CD8-positive, alpha-beta T cell (primary cell): ENCODE measurements at regions of chr7 and their contacts with region 1.

Region 1: GRCh38 chr7:133434055-133434865 is 181.4 kb downstream of the EXOC4 start:
- DNase-seq: peak in 2 of 9 experiments; percentile 38 to 50
- ATAC-seq: no peak
- H3K4me3 ChIP-seq: no peak overlapping the region
- H3K4me3 Mint-ChIP-seq: no peak overlapping the region
- H3K27ac ChIP-seq: no peak overlapping the region
- H3K27ac Mint-ChIP-seq: no peak overlapping the region
- H3K4me1 ChIP-seq: no peaks in the 10 kb centered on the region
- H3K4me1 Mint-ChIP-seq: peaks cover 5% of the 10 kb centered on the region
- H3K27me3 ChIP-seq: no peaks in the 10 kb centered on the region
- H3K27me3 Mint-ChIP-seq: no peaks in the 10 kb centered on the region
- CTCF ChIP-seq: peak; percentile 32

Region 2: GRCh38 chr7:131688738-131689661 is 1745.3 kb before region 1 on chr7:
- CTCF ChIA-PET with region 1: no interaction called
- POLR2A ChIA-PET with region 1: no interaction called
- intact Hi-C with region 1: loop called in 1 of 2 experiments (anchors 2 kb)
- DNase-seq: peak; percentile 14 to 74 (median 53)
- ATAC-seq: peak; percentile 65
- H3K4me3 ChIP-seq: no peak overlapping the region
- H3K4me3 Mint-ChIP-seq: no peak overlapping the region
- H3K27ac ChIP-seq: no peak overlapping the region
- H3K27ac Mint-ChIP-seq: no peak overlapping the region
- H3K4me1 ChIP-seq: no peaks in the 10 kb centered on the region
- H3K4me1 Mint-ChIP-seq: peaks cover 3% of the 10 kb centered on the region
- H3K27me3 ChIP-seq: peaks cover 0 to 5% of the 10 kb centered on the region in 2 experiments
- H3K27me3 Mint-ChIP-seq: peaks cover 38% of the 10 kb centered on the region
- CTCF ChIP-seq: peak; percentile 85

Region 3: DNA sequence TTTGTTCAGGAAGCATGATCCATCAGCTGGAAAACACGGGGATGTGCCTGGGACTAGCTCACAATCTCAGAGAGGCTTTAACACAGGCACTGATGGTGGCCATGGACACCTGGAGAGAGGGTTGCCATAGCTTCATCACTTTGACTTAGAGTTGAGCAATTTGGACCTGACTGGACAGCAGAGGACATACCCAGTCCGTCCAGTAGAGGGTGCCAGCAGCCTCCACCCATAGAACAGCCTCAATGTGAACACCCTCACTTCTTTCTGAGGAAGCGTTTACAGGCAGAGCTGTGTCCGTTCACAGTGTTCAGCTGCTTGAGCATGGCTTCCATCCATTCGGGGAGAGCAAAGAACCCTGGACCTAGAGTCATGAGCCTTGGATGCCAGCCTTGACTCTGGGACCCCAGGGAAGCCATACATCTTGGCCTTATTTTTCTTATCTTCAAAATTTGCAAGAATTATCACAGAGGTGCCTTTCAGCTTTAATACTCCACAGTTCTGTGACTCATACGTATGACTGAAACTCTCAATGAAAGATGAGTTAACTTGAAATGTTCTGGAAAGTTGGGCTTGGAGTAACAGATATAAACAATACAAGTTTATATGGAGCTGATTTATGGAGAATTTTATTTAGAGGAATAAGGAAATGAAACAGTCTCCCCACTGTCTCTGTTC is 1575.0 kb before region 1 on chr7:
- CTCF ChIA-PET with region 1: no interaction called
- POLR2A ChIA-PET with region 1: no interaction called
- intact Hi-C with region 1: loop called in 1 of 2 experiments (anchors 5 kb)
- DNase-seq: peak in 7 of 9 experiments; percentile 11 to 54 (median 37)
- ATAC-seq: peak; percentile 46
- H3K4me3 ChIP-seq: no peak overlapping the region
- H3K4me3 Mint-ChIP-seq: no peak overlapping the region
- H3K27ac ChIP-seq: no peak overlapping the region
- H3K27ac Mint-ChIP-seq: no peak overlapping the region
- H3K4me1 ChIP-seq: no peaks in the 10 kb centered on the region
- H3K4me1 Mint-ChIP-seq: no peaks in the 10 kb centered on the region
- H3K27me3 ChIP-seq: no peaks in the 10 kb centered on the region
- H3K27me3 Mint-ChIP-seq: peaks cover 4% of the 10 kb centered on the region
- CTCF ChIP-seq: peak; percentile 57

Region 4: GRCh38 chr7:132318352-132319318 is 1115.6 kb before region 1 on chr7:
- CTCF ChIA-PET with region 1: interaction called, 3 read pairs
- POLR2A ChIA-PET with region 1: no interaction called
- intact Hi-C with region 1: loop called (anchors 2 to 5 kb)
- DNase-seq: peak; percentile 49 to 85 (median 76)
- ATAC-seq: peak; percentile 88
- H3K4me3 ChIP-seq: no peak overlapping the region
- H3K4me3 Mint-ChIP-seq: peak overlapping the region; percentile 42
- H3K27ac ChIP-seq: no peak overlapping the region
- H3K27ac Mint-ChIP-seq: no peak overlapping the region
- H3K4me1 ChIP-seq: peaks cover 9% of the 10 kb centered on the region
- H3K4me1 Mint-ChIP-seq: peaks cover 8% of the 10 kb centered on the region
- H3K27me3 ChIP-seq: peaks cover 9 to 12% of the 10 kb centered on the region in 2 experiments
- H3K27me3 Mint-ChIP-seq: peaks cover 31% of the 10 kb centered on the region
- CTCF ChIP-seq: peak; percentile 87

Region 5: GRCh38 chr7:133051066-133051465 is 383.2 kb before region 1 on chr7:
- CTCF ChIA-PET with region 1: no interaction called
- POLR2A ChIA-PET with region 1: no interaction called
- intact Hi-C with region 1: no loop called
- DNase-seq: peak in 1 of 9 experiments; percentile 7
- ATAC-seq: no peak
- H3K4me3 ChIP-seq: no peak overlapping the region
- H3K4me3 Mint-ChIP-seq: no peak overlapping the region
- H3K27ac ChIP-seq: no peak overlapping the region
- H3K27ac Mint-ChIP-seq: no peak overlapping the region
- H3K4me1 ChIP-seq: no peaks in the 10 kb centered on the region
- H3K4me1 Mint-ChIP-seq: peaks cover 49% of the 10 kb centered on the region
- H3K27me3 ChIP-seq: no peaks in the 10 kb centered on the region
- H3K27me3 Mint-ChIP-seq: no peaks in the 10 kb centered on the region
- CTCF ChIP-seq: no peak

Region 6: GRCh38 chr7:133364959-133365690 is 69.1 kb before region 1 on chr7:
- CTCF ChIA-PET with region 1: no interaction called
- POLR2A ChIA-PET with region 1: no interaction called
- intact Hi-C with region 1: no loop called
- DNase-seq: peak in 2 of 9 experiments; percentile 12 to 28
- ATAC-seq: no peak
- H3K4me3 ChIP-seq: no peak overlapping the region
- H3K4me3 Mint-ChIP-seq: no peak overlapping the region
- H3K27ac ChIP-seq: peak overlapping the region in 1 of 2 experiments; percentile 14
- H3K27ac Mint-ChIP-seq: no peak overlapping the region
- H3K4me1 ChIP-seq: no peaks in the 10 kb centered on the region
- H3K4me1 Mint-ChIP-seq: peaks cover 27% of the 10 kb centered on the region
- H3K27me3 ChIP-seq: no peaks in the 10 kb centered on the region
- H3K27me3 Mint-ChIP-seq: no peaks in the 10 kb centered on the region
- CTCF ChIP-seq: no peak

Region 7: DNA sequence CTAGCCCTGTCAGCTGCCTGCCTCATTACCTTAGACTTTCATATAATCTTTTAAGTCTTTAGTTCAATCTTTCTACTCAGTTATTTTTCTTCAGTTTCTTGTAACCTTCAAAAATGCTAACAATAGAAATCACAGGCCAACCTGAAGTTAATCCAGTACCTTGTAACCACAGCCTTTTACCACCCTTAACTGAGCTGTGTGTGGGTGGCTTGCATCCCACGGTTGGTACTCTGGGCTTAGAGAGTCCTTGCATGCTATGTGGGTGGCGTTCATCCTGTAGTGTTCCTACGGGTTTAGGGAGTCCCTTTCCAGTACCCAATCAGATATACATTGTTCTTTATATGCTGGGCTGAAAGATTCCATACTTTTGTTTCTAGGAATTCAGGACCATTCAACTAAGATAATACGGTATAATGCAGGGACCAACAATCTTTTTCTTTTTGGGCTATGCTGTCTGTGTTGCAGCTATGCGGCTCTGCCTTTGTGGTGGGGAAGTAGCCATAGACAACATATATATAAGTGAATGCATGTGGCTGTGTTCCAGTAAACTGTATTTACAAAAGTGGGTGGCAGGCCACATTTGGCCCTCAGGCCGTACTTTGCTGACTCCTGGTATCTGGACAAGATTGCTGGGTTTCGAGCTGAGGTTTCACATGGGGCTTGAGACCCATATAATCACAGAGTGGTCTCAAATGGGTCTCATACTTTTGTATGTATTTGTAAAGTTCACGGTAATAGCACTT is 412.1 kb after region 1 on chr7:
- CTCF ChIA-PET with region 1: no interaction called
- POLR2A ChIA-PET with region 1: no interaction called
- intact Hi-C with region 1: no loop called
- DNase-seq: no peak
- ATAC-seq: no peak
- H3K4me3 ChIP-seq: no peak overlapping the region
- H3K4me3 Mint-ChIP-seq: no peak overlapping the region
- H3K27ac ChIP-seq: no peak overlapping the region
- H3K27ac Mint-ChIP-seq: no peak overlapping the region
- H3K4me1 ChIP-seq: no peaks in the 10 kb centered on the region
- H3K4me1 Mint-ChIP-seq: peaks cover 9% of the 10 kb centered on the region
- H3K27me3 ChIP-seq: no peaks in the 10 kb centered on the region
- H3K27me3 Mint-ChIP-seq: no peaks in the 10 kb centered on the region
- CTCF ChIP-seq: no peak